Heart left ventricle (tissue), 16 donors: ENCODE measurements at regions of chr2 and their contacts with region 1.

Region 1: GRCh38 chr2:56522605-56523089 is 338.9 kb downstream of the CCDC85A start:
- DNase-seq: peak in 4 of 5 donors; percentile 51 to 64 (median 60)
- ATAC-seq: peak; percentile 95 to 97 (median 96)
- H3K4me3 ChIP-seq: peak overlapping the region in 1 of 12 donors; percentile 5
- H3K27ac ChIP-seq: peak overlapping the region; percentile 12 to 84 (median 69)
- H3K4me1 ChIP-seq: peaks cover 0 to 9% (median 3%) of the 10 kb centered on the region in 12 donors
- H3K27me3 ChIP-seq: no peaks in the 10 kb centered on the region
- CTCF ChIP-seq: no peak
- POLR2A ChIP-seq: no peak

Region 2: GRCh38 chr2:56325661-56326345 is 196.8 kb before region 1 on chr2:
- intact Hi-C with region 1: loop called in 1 of 10 experiments (anchors 5 kb)
- DNase-seq: no peak
- ATAC-seq: peak in 3 of 4 donors; percentile 60 to 70 (median 61)
- H3K4me3 ChIP-seq: no peak overlapping the region
- H3K27ac ChIP-seq: peak overlapping the region in 10 of 12 donors; percentile 3 to 74 (median 48)
- H3K4me1 ChIP-seq: peaks cover 0 to 29% (median 10%) of the 10 kb centered on the region in 12 donors
- H3K27me3 ChIP-seq: no peaks in the 10 kb centered on the region
- CTCF ChIP-seq: no peak
- POLR2A ChIP-seq: no peak